Activated CD4-positive, alpha-beta T cell treated with anti-CD3 and anti-CD28 coated beads for 36 hours (primary cell): ENCODE measurements at regions of chr10 and their contacts with region 1.

Region 1: GRCh38 chr10:6050801-6051445 is 11.2 kb downstream of the IL2RA start:
- DNase-seq: peak; percentile 96
- ATAC-seq: peak; percentile 37
- H3K4me3 Mint-ChIP-seq: peak overlapping the region; percentile 81
- H3K27ac Mint-ChIP-seq: peak overlapping the region; percentile 96
- H3K4me1 Mint-ChIP-seq: peaks cover 85% of the 10 kb centered on the region
- H3K27me3 Mint-ChIP-seq: no peaks in the 10 kb centered on the region

Region 2: DNA sequence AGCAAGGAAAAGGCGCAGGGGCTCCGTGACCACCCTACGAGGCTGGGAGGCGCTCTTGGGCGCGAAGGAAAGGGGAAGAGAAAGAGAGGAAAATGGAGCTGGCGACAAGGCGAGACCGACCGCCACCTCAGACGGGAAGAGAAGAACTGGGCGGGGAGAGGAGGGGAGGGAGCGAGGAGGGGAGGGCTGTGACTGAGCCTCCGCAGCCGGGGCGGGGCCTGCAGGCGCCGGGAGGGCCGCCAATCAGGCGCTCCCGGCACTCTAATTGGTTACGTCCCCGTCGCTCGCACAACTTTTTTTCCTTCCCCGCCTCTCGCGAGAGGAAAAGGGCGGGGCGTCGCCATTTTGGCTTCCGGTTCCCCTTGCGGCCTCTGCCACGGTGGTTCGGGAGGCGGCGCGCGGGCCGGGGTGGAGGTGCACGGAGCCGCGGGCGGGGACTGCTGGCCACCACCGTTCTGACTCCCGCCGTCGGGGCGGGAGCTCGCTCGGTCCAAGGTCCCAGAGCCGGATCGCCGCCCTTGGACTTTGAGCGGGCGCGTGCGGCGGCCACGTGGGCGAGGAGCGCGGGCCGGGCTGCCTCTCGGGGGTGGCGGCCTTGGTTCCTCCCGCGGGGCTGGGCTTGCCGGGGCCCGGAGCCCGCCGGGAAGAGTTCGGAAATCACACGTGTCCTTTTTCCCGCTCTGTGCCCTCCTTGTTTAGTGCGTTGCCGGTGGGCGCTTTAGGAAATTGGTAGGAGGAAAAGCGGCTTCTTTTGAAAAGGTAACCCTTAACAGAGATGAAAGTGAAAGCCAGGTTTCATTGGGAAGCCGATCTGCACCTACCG is 237.4 kb before region 1 on chr10 and contains the start of gene GDI2:
- CTCF ChIA-PET with region 1: no interaction called
- POLR2A ChIA-PET with region 1: no interaction called
- intact Hi-C with region 1: loop called (anchors 2 to 10 kb)
- DNase-seq: peak; percentile 98
- ATAC-seq: peak; percentile 94
- H3K4me3 Mint-ChIP-seq: peak within 1 kb of the TSS; percentile 92
- H3K27ac Mint-ChIP-seq: peak within 1 kb of the TSS; percentile 98
- H3K4me1 Mint-ChIP-seq: peaks cover 60% of the 10 kb centered on the region
- H3K27me3 Mint-ChIP-seq: no peaks in the 10 kb centered on the region
- total RNA-seq, gene GDI2: 276 to 290 TPM

Region 3: GRCh38 chr10:6033954-6034353 is 17.0 kb before region 1 on chr10:
- CTCF ChIA-PET with region 1: interaction called, 10 read pairs
- POLR2A ChIA-PET with region 1: interaction called, 3 read pairs
- intact Hi-C with region 1: no loop called
- DNase-seq: peak; percentile 5
- ATAC-seq: no peak
- H3K4me3 Mint-ChIP-seq: no peak overlapping the region
- H3K27ac Mint-ChIP-seq: peak overlapping the region; percentile 29
- H3K4me1 Mint-ChIP-seq: peaks cover 73% of the 10 kb centered on the region
- H3K27me3 Mint-ChIP-seq: no peaks in the 10 kb centered on the region

Region 4: DNA sequence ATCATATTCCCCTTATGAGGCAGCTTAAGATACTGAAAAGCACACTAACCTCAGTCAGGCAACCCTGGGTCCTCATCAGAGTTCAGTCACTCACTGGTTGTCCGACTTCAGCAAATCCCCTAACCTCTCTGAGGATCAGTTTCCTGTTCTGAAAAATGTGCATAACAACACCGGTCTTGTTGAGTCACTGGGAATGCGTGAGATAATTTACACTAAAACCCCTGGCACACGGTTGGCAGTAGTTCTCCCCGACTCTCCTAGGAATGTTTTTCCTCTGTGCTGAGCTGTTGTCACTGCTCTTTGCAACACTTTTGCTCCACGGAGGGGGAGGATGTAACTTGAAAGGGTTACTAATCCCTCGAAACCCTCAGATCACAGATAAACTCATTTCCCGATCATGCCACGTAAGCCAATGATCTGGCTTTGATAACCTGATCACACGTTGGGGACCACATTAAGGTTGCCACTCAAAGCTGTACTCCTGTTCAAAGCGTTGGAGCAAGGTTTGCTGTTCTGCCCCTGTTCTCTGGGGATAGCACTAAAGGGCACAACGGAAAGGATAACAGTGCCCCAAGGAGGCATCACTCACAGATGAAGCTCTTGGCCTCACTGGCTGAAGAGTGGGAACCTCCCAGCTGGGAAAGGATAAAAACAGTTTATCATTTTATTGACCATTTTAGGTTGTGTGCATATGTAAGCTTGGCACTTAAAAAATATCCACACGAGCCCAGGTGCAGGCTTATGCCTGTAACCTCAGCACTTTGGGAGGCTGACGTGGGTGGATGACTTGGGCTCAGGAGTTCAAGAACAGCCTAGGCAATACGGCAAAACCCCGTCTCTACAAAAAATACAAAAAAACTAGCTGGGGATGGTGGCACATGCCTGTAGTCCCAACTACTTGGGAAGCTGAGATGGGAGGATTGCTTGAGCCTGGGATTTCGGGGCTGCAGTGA is 32.9 kb after region 1 on chr10:
- CTCF ChIA-PET with region 1: interaction called, 113 read pairs
- POLR2A ChIA-PET with region 1: interaction called, 70 read pairs
- intact Hi-C with region 1: loop called (anchors 1 kb)
- DNase-seq: peak; percentile 85
- ATAC-seq: peak; percentile 79
- H3K4me3 Mint-ChIP-seq: peak overlapping the region; percentile 71
- H3K27ac Mint-ChIP-seq: peak overlapping the region; percentile 95
- H3K4me1 Mint-ChIP-seq: peaks cover 67% of the 10 kb centered on the region
- H3K27me3 Mint-ChIP-seq: no peaks in the 10 kb centered on the region

Region 5: DNA sequence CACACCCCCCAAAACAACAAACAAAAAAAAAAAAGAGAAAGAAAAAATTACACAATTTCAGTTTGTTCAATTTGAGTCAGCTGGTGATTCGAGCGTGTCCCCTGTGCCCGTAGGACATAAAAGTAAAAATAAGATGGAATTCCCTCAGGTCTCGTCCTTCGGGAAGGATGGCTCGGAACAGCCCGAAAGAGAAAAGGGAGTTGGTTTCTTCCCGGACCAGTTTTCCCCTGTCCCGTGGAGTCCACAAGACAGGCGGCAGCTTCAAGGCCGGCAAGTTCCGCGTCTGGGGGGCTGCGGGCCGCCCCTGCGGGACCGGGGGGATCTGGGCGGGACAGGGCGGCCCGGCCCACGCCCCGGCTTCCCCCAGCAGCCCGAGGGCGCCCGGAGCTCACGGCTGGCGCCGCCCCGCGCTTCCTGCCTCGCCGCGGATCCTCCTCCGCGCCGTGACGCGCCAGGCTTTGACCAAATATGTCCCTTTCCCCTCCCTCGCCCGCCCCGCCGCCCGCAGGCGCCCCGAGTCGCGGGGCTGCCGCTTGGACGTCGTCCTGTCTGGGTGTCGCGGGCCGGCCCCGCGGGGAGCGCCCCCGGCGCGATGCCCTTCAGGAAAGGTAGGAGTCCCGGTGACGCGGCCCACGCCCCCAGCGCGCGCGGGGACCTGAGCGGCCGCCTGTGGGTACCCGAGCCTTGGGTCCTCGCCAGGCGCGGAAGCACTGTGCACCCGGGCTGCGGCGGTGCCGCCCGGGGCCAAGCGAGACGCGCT is 93.7 kb after region 1 on chr10:
- CTCF ChIA-PET with region 1: interaction called, 3 read pairs
- POLR2A ChIA-PET with region 1: interaction called, 5 read pairs
- intact Hi-C with region 1: loop called in 1 of 2 experiments (anchors 5 kb)
- DNase-seq: peak; percentile 94
- ATAC-seq: peak; percentile 71
- H3K4me3 Mint-ChIP-seq: peak overlapping the region; percentile 81
- H3K27ac Mint-ChIP-seq: peak overlapping the region; percentile 90
- H3K4me1 Mint-ChIP-seq: peaks cover 79% of the 10 kb centered on the region
- H3K27me3 Mint-ChIP-seq: no peaks in the 10 kb centered on the region

Region 6: DNA sequence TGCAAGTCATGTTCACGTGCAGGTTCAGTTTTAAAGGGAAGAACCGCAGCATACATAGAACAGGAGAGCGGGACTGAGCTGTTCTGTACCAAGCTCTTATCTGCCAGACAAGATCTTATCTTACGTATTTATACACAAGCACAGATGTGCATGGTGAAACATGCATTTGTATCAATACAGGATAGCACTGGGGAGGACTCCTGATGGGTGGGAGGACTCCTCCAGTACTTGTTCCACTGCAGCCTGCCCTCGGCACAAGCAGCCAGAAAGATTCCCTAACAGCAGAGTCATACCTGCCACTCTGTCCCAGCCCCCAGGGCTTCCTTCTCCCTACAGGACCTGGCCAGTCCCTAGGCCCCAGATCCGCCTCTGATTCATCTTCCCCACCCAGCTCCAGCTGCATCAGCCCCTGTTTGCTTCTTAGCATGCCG is 542.3 kb after region 1 on chr10:
- CTCF ChIA-PET with region 1: no interaction called
- POLR2A ChIA-PET with region 1: no interaction called
- intact Hi-C with region 1: loop called (anchors 1 to 10 kb)
- DNase-seq: peak; percentile 37
- ATAC-seq: peak; percentile 73
- H3K4me3 Mint-ChIP-seq: peak overlapping the region; percentile 33
- H3K27ac Mint-ChIP-seq: peak overlapping the region; percentile 87
- H3K4me1 Mint-ChIP-seq: peaks cover 92% of the 10 kb centered on the region
- H3K27me3 Mint-ChIP-seq: no peaks in the 10 kb centered on the region

Region 7: GRCh38 chr10:6665847-6666246 is 614.9 kb after region 1 on chr10:
- CTCF ChIA-PET with region 1: no interaction called
- POLR2A ChIA-PET with region 1: no interaction called
- intact Hi-C with region 1: no loop called
- DNase-seq: peak; percentile 66
- ATAC-seq: peak; percentile 98
- H3K4me3 Mint-ChIP-seq: peak overlapping the region; percentile 8
- H3K27ac Mint-ChIP-seq: peak overlapping the region; percentile 39
- H3K4me1 Mint-ChIP-seq: peaks cover 25% of the 10 kb centered on the region
- H3K27me3 Mint-ChIP-seq: no peaks in the 10 kb centered on the region

Region 8: DNA sequence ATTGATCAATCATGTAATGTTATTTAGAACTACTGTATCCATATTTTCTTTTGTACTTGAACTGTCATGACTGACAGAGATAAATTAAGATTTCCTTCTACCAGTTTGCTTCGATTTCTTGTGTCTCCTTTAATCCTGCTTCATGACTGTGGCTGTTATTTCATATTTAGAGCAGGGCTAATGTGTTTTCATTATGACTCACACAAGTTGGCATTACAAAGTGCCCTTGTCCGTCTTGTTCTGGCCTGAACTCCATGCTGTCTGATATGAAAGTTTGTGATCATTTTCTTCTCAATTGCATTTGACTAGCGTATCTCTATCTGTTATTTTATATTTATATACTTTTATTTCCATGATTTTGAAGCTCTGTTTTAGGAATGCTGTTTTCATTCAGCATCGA is 873.2 kb after region 1 on chr10:
- CTCF ChIA-PET with region 1: no interaction called
- POLR2A ChIA-PET with region 1: no interaction called
- intact Hi-C with region 1: no loop called
- DNase-seq: no peak
- ATAC-seq: no peak
- H3K4me3 Mint-ChIP-seq: no peak overlapping the region
- H3K27ac Mint-ChIP-seq: no peak overlapping the region
- H3K4me1 Mint-ChIP-seq: peaks cover 44% of the 10 kb centered on the region
- H3K27me3 Mint-ChIP-seq: no peaks in the 10 kb centered on the region